CD8-positive, alpha-beta memory T cell (primary cell): ENCODE measurements at regions of chr19 and their contacts with region 1.

Region 1: DNA sequence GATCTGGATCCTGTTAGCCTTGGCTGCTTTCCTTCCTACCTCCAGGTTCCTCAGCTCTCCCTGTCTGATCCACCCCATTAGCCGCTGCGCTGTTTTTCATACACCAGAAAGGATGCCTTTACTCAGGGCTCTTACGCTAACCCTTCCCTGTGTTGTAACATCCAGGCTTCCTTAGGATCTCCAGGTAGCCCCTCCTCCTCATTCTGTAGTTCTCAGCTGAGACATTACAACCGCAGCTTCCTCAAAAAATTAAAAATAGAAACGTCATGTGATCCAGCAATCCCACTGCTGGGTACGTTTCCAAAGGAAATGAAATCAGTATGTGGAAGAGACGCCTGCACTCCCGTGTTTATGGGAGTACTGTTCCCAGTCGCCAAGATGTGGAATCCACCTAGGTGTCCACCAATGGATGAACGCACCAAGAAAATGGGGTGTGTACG is 18.4 kb upstream of the MYADM start:
- DNase-seq: no peak
- H3K4me3 ChIP-seq: no peak overlapping the region
- H3K4me3 Mint-ChIP-seq: no peak overlapping the region
- H3K27ac ChIP-seq: no peak overlapping the region
- H3K27ac Mint-ChIP-seq: no peak overlapping the region
- H3K4me1 ChIP-seq: no peaks in the 10 kb centered on the region
- H3K4me1 Mint-ChIP-seq: peaks cover 6 to 9% (median 9%) of the 10 kb centered on the region in 3 donors
- H3K27me3 ChIP-seq: peaks cover 9% of the 10 kb centered on the region
- H3K27me3 Mint-ChIP-seq: peaks cover 13 to 39% of the 10 kb centered on the region in 2 donors

Region 2: DNA sequence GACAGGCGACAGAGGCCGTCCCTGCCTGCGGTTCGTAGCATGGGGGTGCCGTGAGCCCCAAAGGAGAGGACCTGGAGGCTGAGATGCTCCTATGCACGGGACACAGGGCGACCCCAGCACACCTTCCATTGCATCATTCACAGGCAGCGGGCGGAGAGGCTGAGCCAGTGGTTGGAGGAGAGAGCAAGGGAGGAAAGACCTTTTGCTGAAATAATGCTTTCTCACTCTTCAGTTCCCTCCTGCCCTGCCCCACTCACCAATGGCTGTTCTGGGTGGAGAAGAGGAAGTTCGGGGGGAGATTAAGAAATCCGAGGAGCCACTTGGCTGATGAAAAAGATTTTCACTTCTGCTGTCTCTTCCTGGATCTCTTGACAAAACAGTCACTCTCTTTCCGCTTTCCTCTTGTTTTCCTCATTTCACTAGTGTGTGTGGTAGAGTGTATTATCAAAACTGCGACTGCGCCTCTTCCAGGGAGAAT is 25.1 kb before region 1 on chr19 and contains the start of gene NLRP12:
- CTCF ChIA-PET with region 1: no interaction called
- POLR2A ChIA-PET with region 1: no interaction called
- DNase-seq: no peak
- H3K4me3 ChIP-seq: no peak within 1 kb of the TSS
- H3K4me3 Mint-ChIP-seq: no peak within 1 kb of the TSS
- H3K27ac ChIP-seq: no peak within 1 kb of the TSS
- H3K27ac Mint-ChIP-seq: no peak within 1 kb of the TSS
- H3K4me1 ChIP-seq: no peaks in the 10 kb centered on the region
- H3K4me1 Mint-ChIP-seq: no peaks in the 10 kb centered on the region
- H3K27me3 ChIP-seq: peaks cover 3% of the 10 kb centered on the region
- H3K27me3 Mint-ChIP-seq: peaks cover 24 to 28% of the 10 kb centered on the region in 2 donors
- total RNA-seq, gene NLRP12: not detected

Region 3: GRCh38 chr19:53867225-53868090 is 18.2 kb after region 1 on chr19 and contains the start of gene MYADM:
- CTCF ChIA-PET with region 1: interaction called, 10 read pairs
- POLR2A ChIA-PET with region 1: interaction called, 3 read pairs
- DNase-seq: peak; percentile 99 to 100 (median 100)
- H3K4me3 ChIP-seq: peak within 1 kb of the TSS; percentile 94
- H3K4me3 Mint-ChIP-seq: peak within 1 kb of the TSS; percentile 95 to 99 (median 98)
- H3K27ac ChIP-seq: peak within 1 kb of the TSS; percentile 97
- H3K27ac Mint-ChIP-seq: peak within 1 kb of the TSS; percentile 99 to 100 (median 100)
- H3K4me1 ChIP-seq: peaks cover 31% of the 10 kb centered on the region
- H3K4me1 Mint-ChIP-seq: peaks cover 29 to 44% (median 33%) of the 10 kb centered on the region in 3 donors
- H3K27me3 ChIP-seq: no peaks in the 10 kb centered on the region
- H3K27me3 Mint-ChIP-seq: peaks cover 0 to 20% of the 10 kb centered on the region in 2 donors
- total RNA-seq, gene MYADM: 44.2 to 47.8 TPM

Region 4: DNA sequence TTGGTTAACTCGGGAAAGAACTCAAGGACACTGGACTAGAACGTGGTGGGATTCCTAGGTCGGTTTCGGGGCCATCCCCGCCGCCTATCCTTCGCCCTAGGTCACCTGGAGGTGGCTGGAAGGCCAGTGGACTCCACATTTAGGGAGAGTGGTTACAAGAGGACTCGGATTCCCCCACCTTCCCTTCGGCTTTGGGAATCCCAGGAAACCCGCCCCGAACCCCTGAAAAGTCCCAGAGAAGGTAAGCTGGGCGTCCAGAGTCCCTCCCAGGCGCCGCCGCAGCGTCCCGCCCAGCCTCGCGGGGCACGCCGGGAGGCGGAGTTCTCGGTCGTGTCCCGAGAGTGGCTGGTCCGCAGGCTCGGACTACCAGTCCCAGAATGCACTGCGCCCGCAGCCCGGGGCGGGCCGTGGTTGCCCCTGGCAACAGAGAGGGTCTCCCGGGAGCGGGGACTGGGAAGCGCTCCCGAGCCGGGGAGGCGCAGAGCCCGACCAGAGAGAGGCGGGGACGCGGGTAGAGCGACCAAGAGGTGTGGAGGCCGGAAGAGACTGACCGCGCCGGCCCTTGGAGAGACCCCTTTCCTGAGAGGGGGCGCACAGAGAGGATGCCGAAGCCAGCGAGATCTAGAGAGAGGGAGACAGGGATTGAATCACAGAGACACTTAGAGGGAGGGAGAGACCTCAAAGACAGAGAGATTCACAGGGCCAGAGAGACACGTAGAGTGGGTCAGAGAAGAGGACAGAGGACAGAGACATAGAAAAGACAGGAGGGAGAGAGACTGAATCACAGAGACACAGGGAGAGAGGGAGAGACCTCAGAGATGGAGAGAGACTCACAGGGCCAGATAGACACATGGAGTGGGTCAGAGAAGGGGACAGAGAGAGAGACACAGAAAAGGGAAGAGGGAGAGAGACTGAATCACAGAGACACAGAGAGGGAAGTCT is 30.2 kb after region 1 on chr19:
- CTCF ChIA-PET with region 1: interaction called, 21 read pairs
- POLR2A ChIA-PET with region 1: no interaction called
- DNase-seq: peak; percentile 60 to 86 (median 73)
- H3K4me3 ChIP-seq: peak overlapping the region; percentile 74
- H3K4me3 Mint-ChIP-seq: peak overlapping the region in 1 of 7 donors; percentile 80
- H3K27ac ChIP-seq: no peak overlapping the region
- H3K27ac Mint-ChIP-seq: peak overlapping the region in 2 of 8 donors; percentile 19 to 43
- H3K4me1 ChIP-seq: peaks cover 70% of the 10 kb centered on the region
- H3K4me1 Mint-ChIP-seq: peaks cover 49 to 56% (median 53%) of the 10 kb centered on the region in 3 donors
- H3K27me3 ChIP-seq: peaks cover 37% of the 10 kb centered on the region
- H3K27me3 Mint-ChIP-seq: peaks cover 17 to 21% of the 10 kb centered on the region in 2 donors

Region 5: GRCh38 chr19:54023191-54023590 is 173.9 kb after region 1 on chr19:
- CTCF ChIA-PET with region 1: interaction called, 28 read pairs
- POLR2A ChIA-PET with region 1: no interaction called
- DNase-seq: no peak
- H3K4me3 ChIP-seq: no peak overlapping the region
- H3K4me3 Mint-ChIP-seq: no peak overlapping the region
- H3K27ac ChIP-seq: no peak overlapping the region
- H3K27ac Mint-ChIP-seq: no peak overlapping the region
- H3K4me1 ChIP-seq: no peaks in the 10 kb centered on the region
- H3K4me1 Mint-ChIP-seq: peaks cover 0 to 6% (median 2%) of the 10 kb centered on the region in 3 donors
- H3K27me3 ChIP-seq: peaks cover 3% of the 10 kb centered on the region
- H3K27me3 Mint-ChIP-seq: peaks cover 12 to 30% of the 10 kb centered on the region in 2 donors